ENCODE measurements at regions of chr15 and their contacts with region 1.

Region 1: GRCh38 chr15:89776274-89777072 is at the start of gene MESP2:
- DNase-seq: peak; percentile 87 to 92
- ATAC-seq: peak; percentile 84 to 96 (median 88)
- H3K4me3 ChIP-seq: peak within 1 kb of the TSS; percentile 66
- H3K27ac ChIP-seq: no peak within 1 kb of the TSS
- H3K4me1 ChIP-seq: peaks cover 5% of the 10 kb centered on the region
- H3K27me3 ChIP-seq: no peaks in the 10 kb centered on the region
- CTCF ChIP-seq: peak; percentile 45
- total RNA-seq, gene MESP2: 0.38 TPM in 1 of 4 donors, not detected in the others

Region 2: GRCh38 chr15:89496155-89497098 is 280.0 kb before region 1 on chr15 and contains the start of gene RHCG:
- intact Hi-C with region 1: no loop called
- DNase-seq: no peak
- ATAC-seq: peak in 1 of 4 donors; percentile 23
- H3K4me3 ChIP-seq: peak within 1 kb of the TSS; percentile 44
- H3K27ac ChIP-seq: no peak within 1 kb of the TSS
- H3K4me1 ChIP-seq: no peaks in the 10 kb centered on the region
- H3K27me3 ChIP-seq: peaks cover 4 to 86% (median 21%) of the 10 kb centered on the region in 3 donors
- CTCF ChIP-seq: no peak
- total RNA-seq, gene RHCG: 0.30 to 0.32 TPM in 2 of 4 donors, not detected in the others

Region 3: DNA sequence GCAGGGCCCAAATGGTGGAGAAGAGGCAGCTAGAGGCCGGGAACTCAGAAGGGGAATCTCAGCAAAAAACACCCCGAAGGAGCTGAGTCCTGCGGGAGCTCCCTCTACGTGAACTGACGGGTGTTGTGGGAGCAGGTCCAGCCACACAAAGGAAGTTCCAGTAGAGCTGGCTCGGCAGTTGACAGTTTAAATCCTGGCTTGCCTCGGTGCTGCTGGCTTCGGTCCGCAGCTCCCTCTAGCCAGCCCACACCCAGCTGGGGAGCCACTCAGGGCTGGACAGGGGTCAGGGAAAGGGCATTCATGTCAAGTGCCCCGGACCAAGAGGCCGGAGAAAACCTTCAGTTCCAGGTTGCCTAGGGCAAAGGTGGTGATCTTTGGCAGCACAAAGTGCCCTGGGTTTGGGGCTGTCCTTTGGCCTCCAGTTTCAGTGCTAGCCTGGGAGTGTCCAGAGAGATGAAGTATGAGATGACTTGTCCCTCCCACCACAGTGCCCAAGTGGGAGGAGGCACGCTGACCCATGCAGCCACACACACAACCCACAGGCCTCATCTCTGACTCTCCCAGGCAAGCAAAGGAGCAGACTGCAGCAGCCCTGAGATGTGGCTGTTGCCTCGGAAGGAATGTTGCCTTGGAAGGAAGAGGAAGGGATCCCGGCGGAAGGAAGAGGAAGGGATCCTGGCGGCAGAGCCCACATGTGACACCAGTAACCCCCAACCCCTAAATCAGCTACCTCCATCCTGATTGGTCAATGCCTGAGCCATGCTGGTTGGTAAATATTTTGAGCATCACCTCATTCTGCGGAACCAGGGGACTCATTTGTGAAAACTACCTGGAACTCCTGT is 52.0 kb after region 1 on chr15:
- intact Hi-C with region 1: loop called (anchors 5 kb)
- DNase-seq: peak; percentile 67 to 77
- ATAC-seq: peak; percentile 57 to 79 (median 72)
- H3K4me3 ChIP-seq: no peak overlapping the region
- H3K27ac ChIP-seq: peak overlapping the region; percentile 41
- H3K4me1 ChIP-seq: peaks cover 12% of the 10 kb centered on the region
- H3K27me3 ChIP-seq: no peaks in the 10 kb centered on the region
- CTCF ChIP-seq: no peak